Naive thymus-derived CD4-positive, alpha-beta T cell (primary cell): ENCODE measurements at regions of chr20 and their contacts with region 1.

Region 1: GRCh38 chr20:13105864-13106457 is 97.2 kb downstream of the SPTLC3 start:
- DNase-seq: peak in 5 of 9 donors; percentile 10 to 34 (median 14)
- ATAC-seq: no peak
- H3K4me3 ChIP-seq: no peak overlapping the region
- H3K4me3 Mint-ChIP-seq: no peak overlapping the region
- H3K27ac ChIP-seq: no peak overlapping the region
- H3K27ac Mint-ChIP-seq: no peak overlapping the region
- H3K4me1 ChIP-seq: no peaks in the 10 kb centered on the region
- H3K4me1 Mint-ChIP-seq: no peaks in the 10 kb centered on the region
- H3K27me3 ChIP-seq: no peaks in the 10 kb centered on the region
- H3K27me3 Mint-ChIP-seq: peaks cover 0 to 6% (median 5%) of the 10 kb centered on the region in 5 donors

Region 2: DNA sequence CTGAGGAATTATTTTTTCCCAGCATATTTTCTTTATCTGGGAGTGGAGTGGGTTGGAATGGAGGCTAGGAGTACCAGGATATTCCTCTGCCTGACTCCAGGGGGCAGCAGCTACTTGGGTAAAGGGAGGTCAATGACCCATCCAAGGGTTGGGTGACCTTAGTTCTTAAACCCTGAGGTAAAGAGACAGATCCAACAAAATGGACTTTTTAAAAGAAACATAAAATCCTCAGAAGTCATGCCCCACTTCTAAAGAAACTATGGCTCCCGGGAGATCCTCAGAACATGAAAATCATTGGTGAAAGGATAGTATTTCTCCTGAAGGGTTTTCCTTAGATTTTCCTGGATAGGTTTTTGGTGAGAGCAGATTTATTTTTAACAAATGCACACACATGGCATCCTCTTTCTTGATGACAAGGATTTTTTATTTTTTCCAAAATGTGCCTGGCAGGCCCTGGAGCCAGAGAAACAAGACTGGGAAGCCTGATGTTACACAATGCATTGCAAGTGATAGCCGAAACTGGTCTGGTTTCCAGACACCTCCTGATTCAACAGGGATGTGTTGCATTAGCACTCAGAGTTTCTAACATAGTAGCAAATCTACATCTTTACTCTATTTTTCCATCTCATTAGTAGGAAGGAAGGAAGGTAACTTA is 1429.2 kb before region 1 on chr20:
- CTCF ChIA-PET with region 1: no interaction called
- POLR2A ChIA-PET with region 1: no interaction called
- intact Hi-C with region 1: loop called in 1 of 2 experiments (anchors 5 kb)
- DNase-seq: no peak
- ATAC-seq: no peak
- H3K4me3 ChIP-seq: no peak overlapping the region
- H3K4me3 Mint-ChIP-seq: no peak overlapping the region
- H3K27ac ChIP-seq: no peak overlapping the region
- H3K27ac Mint-ChIP-seq: no peak overlapping the region
- H3K4me1 ChIP-seq: no peaks in the 10 kb centered on the region
- H3K4me1 Mint-ChIP-seq: no peaks in the 10 kb centered on the region
- H3K27me3 ChIP-seq: no peaks in the 10 kb centered on the region
- H3K27me3 Mint-ChIP-seq: no peaks in the 10 kb centered on the region